Activated CD4-positive, alpha-beta memory T cell treated with anti-CD3 and anti-CD28 coated beads for 36 hours (primary cell): ENCODE measurements at regions of chr4 and their contacts with region 1.

Region 1: GRCh38 chr4:38132107-38132673 is 172.0 kb downstream of the PTTG2 start:
- DNase-seq: peak; percentile 85
- H3K4me3 Mint-ChIP-seq: peak overlapping the region; percentile 56
- H3K27ac Mint-ChIP-seq: peak overlapping the region; percentile 96
- H3K4me1 Mint-ChIP-seq: peaks cover 76% of the 10 kb centered on the region
- H3K27me3 Mint-ChIP-seq: peaks cover 1% of the 10 kb centered on the region

Region 2: GRCh38 chr4:37686373-37687193 is 445.6 kb before region 1 on chr4 and contains the start of gene RELL1:
- CTCF ChIA-PET with region 1: no interaction called
- POLR2A ChIA-PET with region 1: no interaction called
- intact Hi-C with region 1: loop called (anchors 2 kb)
- DNase-seq: peak; percentile 100
- H3K4me3 Mint-ChIP-seq: peak within 1 kb of the TSS; percentile 86
- H3K27ac Mint-ChIP-seq: peak within 1 kb of the TSS; percentile 91
- H3K4me1 Mint-ChIP-seq: peaks cover 34% of the 10 kb centered on the region
- H3K27me3 Mint-ChIP-seq: no peaks in the 10 kb centered on the region
- total RNA-seq, gene RELL1: 15.0 to 16.0 TPM

Region 3: GRCh38 chr4:38015886-38016515 is 116.2 kb before region 1 on chr4:
- CTCF ChIA-PET with region 1: no interaction called
- POLR2A ChIA-PET with region 1: no interaction called
- intact Hi-C with region 1: no loop called
- DNase-seq: no peak
- H3K4me3 Mint-ChIP-seq: no peak overlapping the region
- H3K27ac Mint-ChIP-seq: no peak overlapping the region
- H3K4me1 Mint-ChIP-seq: peaks cover 9% of the 10 kb centered on the region
- H3K27me3 Mint-ChIP-seq: no peaks in the 10 kb centered on the region

Region 4: DNA sequence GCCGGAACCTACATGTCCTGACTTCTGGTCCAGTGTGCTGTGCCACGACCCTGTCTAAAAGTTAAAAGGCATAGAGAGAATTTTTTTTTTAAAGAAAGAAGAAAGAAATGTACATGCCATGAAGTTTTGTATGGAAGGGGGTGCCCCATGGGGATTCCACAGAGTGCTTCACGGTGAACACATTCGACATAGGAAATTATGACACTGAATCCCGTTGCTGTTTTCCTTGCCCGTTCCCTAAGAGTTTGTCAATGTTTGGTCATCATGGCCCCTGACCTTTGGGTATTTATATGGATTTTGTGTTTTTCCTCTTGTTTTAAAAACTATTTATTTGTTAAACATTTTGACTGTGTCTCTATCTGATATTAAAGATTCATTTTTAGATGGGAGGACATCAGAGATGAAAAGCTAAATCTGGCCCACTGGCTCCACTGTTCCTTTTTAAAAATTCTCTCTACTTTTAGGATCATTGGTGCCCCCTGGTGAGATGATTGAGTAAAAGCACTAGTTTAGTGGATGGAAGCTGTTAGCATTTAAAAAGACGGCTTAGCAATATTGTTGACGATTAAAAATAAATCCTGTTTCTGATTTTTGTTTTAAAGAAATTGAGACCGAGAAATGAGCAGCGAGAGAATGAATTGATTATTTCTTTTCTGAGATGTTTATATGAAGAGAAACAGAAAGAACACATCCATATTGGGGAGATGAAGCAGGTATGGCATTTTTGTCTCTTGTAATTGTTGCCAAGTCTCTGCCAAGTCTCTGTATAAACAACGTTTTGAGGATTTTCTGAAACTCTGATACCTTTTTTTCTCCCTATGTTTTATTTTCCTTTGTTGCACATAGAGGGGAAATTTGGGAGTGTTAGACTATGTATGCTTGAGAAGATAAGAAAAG is 97.0 kb before region 1 on chr4:
- CTCF ChIA-PET with region 1: no interaction called
- POLR2A ChIA-PET with region 1: no interaction called
- intact Hi-C with region 1: no loop called
- DNase-seq: no peak
- H3K4me3 Mint-ChIP-seq: no peak overlapping the region
- H3K27ac Mint-ChIP-seq: no peak overlapping the region
- H3K4me1 Mint-ChIP-seq: no peaks in the 10 kb centered on the region
- H3K27me3 Mint-ChIP-seq: no peaks in the 10 kb centered on the region

Region 5: DNA sequence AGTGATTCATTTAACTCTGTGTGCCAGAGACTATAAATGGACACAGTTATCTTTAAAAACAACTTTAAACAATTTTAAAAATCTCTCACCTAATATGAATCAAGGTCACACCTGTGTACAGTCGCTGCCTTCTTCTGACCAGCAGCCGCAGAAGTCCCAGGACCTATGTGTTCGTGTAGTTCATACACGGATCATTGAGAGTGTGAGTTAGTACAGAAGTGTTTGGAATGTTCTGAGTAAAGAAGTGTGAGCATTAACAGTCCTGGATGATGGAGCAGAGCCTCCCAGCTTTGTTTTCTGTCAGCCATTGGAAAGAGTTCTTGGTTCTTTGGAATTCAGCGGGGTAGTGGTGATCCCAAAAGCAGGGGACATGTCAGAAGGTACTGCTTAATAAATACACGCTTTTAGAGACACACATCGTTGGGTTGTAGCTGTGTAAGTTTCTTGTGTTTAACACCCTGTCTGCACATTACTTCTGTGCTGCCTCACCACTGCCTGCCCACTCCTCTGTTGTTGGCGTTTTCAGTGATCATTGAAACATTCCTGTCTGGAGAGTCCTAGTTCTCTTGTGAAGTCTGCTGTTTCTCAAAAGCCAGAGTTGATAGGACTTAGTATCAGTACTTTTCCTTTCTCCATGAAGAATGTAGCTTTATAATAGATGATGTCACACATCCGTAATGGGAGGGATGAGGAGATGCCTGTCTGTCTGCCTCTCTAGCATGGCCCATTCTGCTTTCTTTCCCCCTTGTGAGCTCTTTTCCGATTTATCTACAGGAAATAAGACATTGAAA is 81.4 kb before region 1 on chr4:
- CTCF ChIA-PET with region 1: no interaction called
- POLR2A ChIA-PET with region 1: no interaction called
- intact Hi-C with region 1: no loop called
- DNase-seq: no peak
- H3K4me3 Mint-ChIP-seq: no peak overlapping the region
- H3K27ac Mint-ChIP-seq: no peak overlapping the region
- H3K4me1 Mint-ChIP-seq: no peaks in the 10 kb centered on the region
- H3K27me3 Mint-ChIP-seq: no peaks in the 10 kb centered on the region

Region 6: GRCh38 chr4:38062088-38062893 is 69.9 kb before region 1 on chr4:
- CTCF ChIA-PET with region 1: interaction called, 11 read pairs
- POLR2A ChIA-PET with region 1: no interaction called
- intact Hi-C with region 1: loop called (anchors 1 kb)
- DNase-seq: peak; percentile 80
- H3K4me3 Mint-ChIP-seq: peak overlapping the region; percentile 77
- H3K27ac Mint-ChIP-seq: peak overlapping the region; percentile 70
- H3K4me1 Mint-ChIP-seq: peaks cover 14% of the 10 kb centered on the region
- H3K27me3 Mint-ChIP-seq: no peaks in the 10 kb centered on the region

Region 7: GRCh38 chr4:38113132-38113531 is 19.1 kb before region 1 on chr4:
- CTCF ChIA-PET with region 1: no interaction called
- POLR2A ChIA-PET with region 1: no interaction called
- intact Hi-C with region 1: no loop called
- DNase-seq: no peak
- H3K4me3 Mint-ChIP-seq: no peak overlapping the region
- H3K27ac Mint-ChIP-seq: no peak overlapping the region
- H3K4me1 Mint-ChIP-seq: peaks cover 5% of the 10 kb centered on the region
- H3K27me3 Mint-ChIP-seq: no peaks in the 10 kb centered on the region

Region 8: DNA sequence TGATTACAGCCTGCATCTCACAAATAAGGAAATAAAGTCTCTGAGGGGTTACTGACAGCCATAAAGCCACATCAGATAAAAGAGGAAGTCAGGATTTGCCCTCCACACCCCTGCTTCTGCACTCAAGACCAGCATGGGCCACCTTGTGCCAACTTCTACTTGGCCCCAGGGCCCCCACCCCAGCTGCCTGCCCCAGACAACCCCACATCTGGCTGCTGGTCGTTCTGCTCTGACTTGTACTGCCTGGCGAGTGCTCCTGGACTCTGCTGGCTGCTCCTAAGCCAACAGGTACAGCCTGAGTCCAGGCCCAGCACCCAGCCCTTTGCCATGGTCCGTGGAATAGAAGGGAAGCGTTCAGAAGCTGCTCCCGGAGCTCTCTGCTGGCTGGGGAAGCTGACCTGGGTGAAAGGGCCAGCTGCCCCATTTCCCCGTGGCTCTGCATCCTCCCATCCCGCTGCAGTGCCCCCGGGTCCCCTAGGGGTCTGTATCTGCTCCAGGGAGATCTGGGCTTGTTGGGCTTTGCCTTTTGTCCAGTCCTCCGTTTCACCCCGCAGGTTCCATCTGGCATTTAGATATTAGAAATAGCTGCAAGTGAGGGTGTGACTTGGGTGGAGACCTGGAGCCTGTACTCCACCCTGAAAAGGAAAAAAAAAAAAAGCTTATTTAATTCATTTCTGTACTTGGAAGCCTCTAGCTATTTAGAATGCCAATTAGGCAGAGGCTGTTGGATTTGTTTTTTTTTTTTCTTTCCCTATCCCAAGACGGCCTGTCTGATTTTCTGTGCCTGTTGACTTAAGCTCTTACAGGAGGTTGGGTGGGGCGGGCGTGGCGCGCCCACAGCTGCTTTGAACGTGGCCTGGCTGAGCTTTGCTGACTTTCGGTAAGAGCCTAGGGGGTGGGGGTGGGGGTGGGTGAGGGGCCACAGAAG is 22.8 kb after region 1 on chr4:
- CTCF ChIA-PET with region 1: interaction called, 14 read pairs
- POLR2A ChIA-PET with region 1: interaction called, 54 read pairs
- intact Hi-C with region 1: no loop called
- DNase-seq: peak; percentile 42
- H3K4me3 Mint-ChIP-seq: no peak overlapping the region
- H3K27ac Mint-ChIP-seq: peak overlapping the region; percentile 34
- H3K4me1 Mint-ChIP-seq: peaks cover 42% of the 10 kb centered on the region
- H3K27me3 Mint-ChIP-seq: no peaks in the 10 kb centered on the region

Region 9: GRCh38 chr4:38455092-38455862 is 323.1 kb after region 1 on chr4:
- CTCF ChIA-PET with region 1: no interaction called
- POLR2A ChIA-PET with region 1: no interaction called
- intact Hi-C with region 1: loop called (anchors 2 kb)
- DNase-seq: no peak
- H3K4me3 Mint-ChIP-seq: no peak overlapping the region
- H3K27ac Mint-ChIP-seq: peak overlapping the region; percentile 79
- H3K4me1 Mint-ChIP-seq: peaks cover 49% of the 10 kb centered on the region
- H3K27me3 Mint-ChIP-seq: peaks cover 15% of the 10 kb centered on the region

Region 10: DNA sequence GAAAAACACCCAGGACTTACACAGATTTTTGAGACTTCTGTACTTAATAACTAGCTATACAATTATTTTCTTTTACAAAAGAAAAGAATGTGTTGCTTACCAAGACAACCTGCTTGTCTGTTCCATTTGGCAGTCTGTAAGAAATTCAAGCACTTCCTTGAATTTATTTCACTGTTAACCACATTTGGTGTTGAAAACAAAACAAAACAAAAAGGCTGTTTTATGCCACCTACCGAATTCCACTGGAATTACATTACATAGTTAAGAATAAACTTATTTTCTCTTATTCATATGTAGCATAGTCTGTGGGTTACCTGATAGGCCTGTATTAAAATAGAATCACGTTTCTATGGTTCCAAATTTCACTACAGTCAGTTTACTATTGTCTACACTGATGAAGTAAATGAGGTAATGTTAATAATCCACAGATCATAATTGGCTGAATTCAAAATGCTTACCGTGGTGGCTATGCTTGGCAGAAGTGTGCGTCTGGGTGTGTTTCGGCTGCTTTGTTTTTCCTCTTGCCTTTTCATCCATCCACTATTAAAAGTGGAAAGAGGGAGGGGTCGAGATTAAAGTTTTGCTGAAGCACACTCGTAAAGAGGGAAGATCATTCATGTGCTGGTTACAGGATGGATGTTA is 672.6 kb after region 1 on chr4 and contains the start of gene TLR1:
- CTCF ChIA-PET with region 1: no interaction called
- POLR2A ChIA-PET with region 1: no interaction called
- intact Hi-C with region 1: loop called (anchors 1 kb)
- DNase-seq: peak; percentile 24
- H3K4me3 Mint-ChIP-seq: peak within 1 kb of the TSS; percentile 76
- H3K27ac Mint-ChIP-seq: peak within 1 kb of the TSS; percentile 91
- H3K4me1 Mint-ChIP-seq: peaks cover 35% of the 10 kb centered on the region
- H3K27me3 Mint-ChIP-seq: no peaks in the 10 kb centered on the region
- total RNA-seq, gene TLR1: 1.5 to 1.8 TPM